ENCODE measurements at regions of chr16 and their contacts with region 1.

Region 1: DNA sequence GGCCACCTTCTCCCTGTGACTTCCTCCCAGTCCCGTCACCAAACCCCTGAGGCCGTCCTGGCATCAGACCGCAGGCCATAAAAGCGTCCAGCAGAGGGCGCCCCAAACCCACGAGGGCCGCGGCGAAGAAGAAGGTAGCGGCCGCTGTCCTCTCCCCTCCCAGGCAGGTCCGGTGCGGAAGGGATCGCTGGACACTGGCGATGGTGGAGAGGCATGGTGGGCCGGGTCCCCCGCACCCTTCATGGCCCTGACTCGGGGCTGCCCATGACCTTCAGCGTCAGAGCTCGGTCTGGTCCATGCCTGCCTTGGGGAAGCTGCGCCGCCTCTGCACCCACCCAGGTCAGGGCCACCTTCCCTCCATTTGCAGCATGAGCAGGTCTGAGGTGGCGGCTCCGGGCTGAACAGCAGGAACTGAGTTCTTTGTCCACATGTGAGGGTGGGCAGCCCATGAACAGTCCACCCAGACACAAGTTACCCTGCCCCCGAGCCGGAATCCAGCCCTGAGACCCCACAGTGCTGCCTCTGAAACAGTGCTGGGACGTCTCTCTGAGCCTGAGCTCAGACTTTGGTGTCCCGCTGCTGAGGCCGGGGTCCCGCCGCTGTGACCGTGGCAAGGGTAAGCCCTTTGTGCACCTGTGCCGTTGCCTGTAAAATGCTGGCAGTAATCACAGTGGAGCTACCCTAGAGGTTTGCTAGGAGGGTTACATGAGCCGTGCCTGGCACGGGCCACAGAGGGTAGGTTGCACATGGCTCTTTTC is 40.8 kb upstream of the CMIP start:
- DNase-seq: peak; percentile 92
- ATAC-seq: peak; percentile 98
- H3K4me3 Mint-ChIP-seq: no peak overlapping the region
- H3K27ac Mint-ChIP-seq: no peak overlapping the region
- H3K4me1 Mint-ChIP-seq: no peaks in the 10 kb centered on the region
- H3K27me3 Mint-ChIP-seq: peaks cover 1% of the 10 kb centered on the region

Region 2: GRCh38 chr16:81696961-81697615 is 293.3 kb after region 1 on chr16:
- CTCF ChIA-PET with region 1: interaction called, 3 read pairs
- POLR2A ChIA-PET with region 1: no interaction called
- intact Hi-C with region 1: loop called in 1 of 2 experiments (anchors 1 kb)
- DNase-seq: peak; percentile 77
- ATAC-seq: peak; percentile 68
- H3K4me3 Mint-ChIP-seq: no peak overlapping the region
- H3K27ac Mint-ChIP-seq: no peak overlapping the region
- H3K4me1 Mint-ChIP-seq: no peaks in the 10 kb centered on the region
- H3K27me3 Mint-ChIP-seq: no peaks in the 10 kb centered on the region

Region 3: GRCh38 chr16:81723098-81723723 is 319.4 kb after region 1 on chr16:
- CTCF ChIA-PET with region 1: interaction called, 20 read pairs
- POLR2A ChIA-PET with region 1: no interaction called
- intact Hi-C with region 1: loop called (anchors 1 kb)
- DNase-seq: peak; percentile 47
- ATAC-seq: peak; percentile 79
- H3K4me3 Mint-ChIP-seq: no peak overlapping the region
- H3K27ac Mint-ChIP-seq: no peak overlapping the region
- H3K4me1 Mint-ChIP-seq: peaks cover 13% of the 10 kb centered on the region
- H3K27me3 Mint-ChIP-seq: no peaks in the 10 kb centered on the region

Region 4: GRCh38 chr16:81737885-81738786 is 334.3 kb after region 1 on chr16:
- CTCF ChIA-PET with region 1: interaction called, 10 read pairs
- POLR2A ChIA-PET with region 1: no interaction called
- intact Hi-C with region 1: loop called (anchors 1 to 5 kb)
- DNase-seq: peak; percentile 93
- ATAC-seq: peak; percentile 98
- H3K4me3 Mint-ChIP-seq: peak overlapping the region; percentile 55
- H3K27ac Mint-ChIP-seq: peak overlapping the region; percentile 51
- H3K4me1 Mint-ChIP-seq: no peaks in the 10 kb centered on the region
- H3K27me3 Mint-ChIP-seq: no peaks in the 10 kb centered on the region

Region 5: GRCh38 chr16:82043680-82044584 is 640.1 kb after region 1 on chr16:
- CTCF ChIA-PET with region 1: no interaction called
- POLR2A ChIA-PET with region 1: no interaction called
- intact Hi-C with region 1: no loop called
- DNase-seq: no peak
- ATAC-seq: no peak
- H3K4me3 Mint-ChIP-seq: no peak overlapping the region
- H3K27ac Mint-ChIP-seq: no peak overlapping the region
- H3K4me1 Mint-ChIP-seq: no peaks in the 10 kb centered on the region
- H3K27me3 Mint-ChIP-seq: peaks cover 19% of the 10 kb centered on the region

Measured in activated CD4-positive, alpha-beta T cell treated with anti-CD3 and anti-CD28 coated beads for 36 hours (primary cell).